ENCODE measurements at regions of chr6 and their contacts with region 1.

Region 1: GRCh38 chr6:106287205-106287604 is 38.4 kb downstream of the ATG5 start:
- DNase-seq: no peak
- ATAC-seq: no peak
- H3K4me3 ChIP-seq: no peak overlapping the region
- H3K27ac ChIP-seq: no peak overlapping the region
- H3K4me1 ChIP-seq: no peaks in the 10 kb centered on the region
- H3K27me3 ChIP-seq: no peaks in the 10 kb centered on the region
- CTCF ChIP-seq: no peak
- POLR2A ChIP-seq: no peak
- RAD21 ChIP-seq: no peak

Region 2: GRCh38 chr6:106244931-106245330 is 42.3 kb before region 1 on chr6:
- CTCF ChIA-PET with region 1: no interaction called
- POLR2A ChIA-PET with region 1: no interaction called
- dilution Hi-C with region 1: no loop called
- in situ Hi-C with region 1: no loop called
- intact Hi-C with region 1: loop called (anchors 5 kb)
- DNase-seq: no peak
- ATAC-seq: no peak
- H3K4me3 ChIP-seq: no peak overlapping the region
- H3K27ac ChIP-seq: no peak overlapping the region
- H3K4me1 ChIP-seq: peaks cover 2% of the 10 kb centered on the region; the same call in 1 of the 2 replicates
- H3K27me3 ChIP-seq: no peaks in the 10 kb centered on the region
- CTCF ChIP-seq: no peak
- POLR2A ChIP-seq: no peak
- RAD21 ChIP-seq: no peak

Region 3: DNA sequence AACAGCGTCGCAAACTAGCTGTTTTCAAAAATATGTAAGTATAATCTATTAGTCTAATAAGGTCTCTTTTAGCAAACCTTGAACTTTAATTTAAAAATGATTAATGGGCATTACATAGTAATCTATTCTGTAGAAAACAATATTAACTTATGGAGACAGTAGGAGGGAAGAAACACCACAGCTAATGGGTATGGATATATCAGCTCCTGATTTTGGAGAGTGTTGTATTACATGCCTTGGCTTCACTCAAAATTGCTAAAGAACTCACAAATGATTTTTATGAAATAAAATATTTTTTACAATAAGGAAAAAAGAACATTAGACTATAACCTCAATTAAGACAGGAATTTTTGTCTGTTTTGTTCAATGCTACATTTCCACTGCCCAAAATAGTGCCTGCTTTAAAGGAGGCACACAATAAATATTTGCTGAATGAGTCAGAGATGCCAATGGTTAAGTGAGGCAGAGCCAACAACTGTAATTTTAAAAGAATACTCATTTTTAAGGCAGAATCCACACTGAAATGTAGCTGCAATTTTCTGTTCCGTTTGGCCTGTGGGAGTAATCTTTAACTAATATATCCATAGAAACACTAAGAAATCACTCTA is 22.7 kb after region 1 on chr6:
- CTCF ChIA-PET with region 1: no interaction called
- POLR2A ChIA-PET with region 1: no interaction called
- dilution Hi-C with region 1: no loop called
- in situ Hi-C with region 1: no loop called
- intact Hi-C with region 1: no loop called
- DNase-seq: peak; percentile 8
- ATAC-seq: peak; percentile 57
- H3K4me3 ChIP-seq: no peak overlapping the region
- H3K27ac ChIP-seq: no peak overlapping the region
- H3K4me1 ChIP-seq: peaks cover 2% of the 10 kb centered on the region; the same call in 1 of the 2 replicates
- H3K27me3 ChIP-seq: no peaks in the 10 kb centered on the region
- CTCF ChIP-seq: no peak
- POLR2A ChIP-seq: no peak
- RAD21 ChIP-seq: no peak